Sciatic nerve (tissue), 2 donors: ENCODE measurements at regions of chr7 and their contacts with region 1.

Region 1: GRCh38 chr7:132580717-132581285 is 4.5 kb upstream of the PLXNA4 start:
- DNase-seq: peak; percentile 82
- ATAC-seq: peak; percentile 80

Region 2: GRCh38 chr7:131945313-131945911 is 635.4 kb before region 1 on chr7:
- intact Hi-C with region 1: loop called (anchors 5 kb)
- DNase-seq: no peak
- ATAC-seq: peak; percentile 64

Region 3: DNA sequence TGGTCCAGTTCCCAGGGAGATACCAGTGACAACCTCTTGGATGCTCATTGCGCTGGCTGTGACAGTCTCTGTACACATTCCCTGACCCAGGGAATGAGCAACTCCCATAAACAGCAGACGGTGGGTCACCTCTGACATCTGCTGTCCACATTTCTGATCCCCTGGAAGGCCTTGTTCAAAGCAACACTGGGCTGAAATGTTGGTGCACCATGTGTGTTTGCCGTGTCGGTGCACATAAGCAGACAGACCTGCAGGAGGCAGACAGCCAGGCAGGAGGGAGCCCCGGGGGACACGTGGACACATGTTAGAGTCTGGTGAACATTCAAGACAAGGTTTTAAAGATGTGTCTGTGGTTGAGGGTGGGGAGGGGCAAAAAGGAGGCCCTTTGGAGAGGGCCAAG is 259.4 kb before region 1 on chr7:
- intact Hi-C with region 1: loop called (anchors 10 kb)
- DNase-seq: no peak
- ATAC-seq: no peak

Region 4: DNA sequence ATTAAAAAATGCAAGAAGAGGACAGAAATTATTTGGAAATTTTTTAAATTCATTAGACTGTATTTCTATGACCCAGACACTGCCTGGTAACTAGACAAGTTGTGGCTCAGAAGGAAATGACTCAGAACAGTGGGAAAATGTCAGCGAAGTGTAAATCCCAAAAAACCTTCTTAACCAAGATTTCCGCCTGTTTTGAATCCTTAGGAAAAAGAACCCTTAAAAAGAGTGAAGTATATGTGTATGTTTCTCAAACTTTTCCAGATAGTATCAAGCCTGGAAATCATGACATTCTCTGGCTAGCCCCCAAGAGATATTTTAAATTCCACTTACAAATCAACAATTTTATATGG is 38.1 kb after region 1 on chr7:
- intact Hi-C with region 1: no loop called
- DNase-seq: no peak
- ATAC-seq: no peak